ENCODE measurements at regions of chr12 and their contacts with region 1.

Region 1: GRCh38 chr12:55760663-55761062 is 17.7 kb downstream of the GDF11 start:
- DNase-seq: peak; percentile 82
- ATAC-seq: peak; percentile 97
- H3K4me3 Mint-ChIP-seq: no peak overlapping the region
- H3K27ac Mint-ChIP-seq: peak overlapping the region; percentile 93
- H3K4me1 Mint-ChIP-seq: peaks cover 20% of the 10 kb centered on the region
- H3K27me3 Mint-ChIP-seq: no peaks in the 10 kb centered on the region

Region 2: GRCh38 chr12:55745361-55746146 is 15.1 kb before region 1 on chr12:
- CTCF ChIA-PET with region 1: interaction called, 19 read pairs
- POLR2A ChIA-PET with region 1: no interaction called
- intact Hi-C with region 1: loop called in 1 of 2 experiments (anchors 2 kb)
- DNase-seq: no peak
- ATAC-seq: no peak
- H3K4me3 Mint-ChIP-seq: peak overlapping the region; percentile 82
- H3K27ac Mint-ChIP-seq: no peak overlapping the region
- H3K4me1 Mint-ChIP-seq: peaks cover 24% of the 10 kb centered on the region
- H3K27me3 Mint-ChIP-seq: no peaks in the 10 kb centered on the region

Region 3: DNA sequence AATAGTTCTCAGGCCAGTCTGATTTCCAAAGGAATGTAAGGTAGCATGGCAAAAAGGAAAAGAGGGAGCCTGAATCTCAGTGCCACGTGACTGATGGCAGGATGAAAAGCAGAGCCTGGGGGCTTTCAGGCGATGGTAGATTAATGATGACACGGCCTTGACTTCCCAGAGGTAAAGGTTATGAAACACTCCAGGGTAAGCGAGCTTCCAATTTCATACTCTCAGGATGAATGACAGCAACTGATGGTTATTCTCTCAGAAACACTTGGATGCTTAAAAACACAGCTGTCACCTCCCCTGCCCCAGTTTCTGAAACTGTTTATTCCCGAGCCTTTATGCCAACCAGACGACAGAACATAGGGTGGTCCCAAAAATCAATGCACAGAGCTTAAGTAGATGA is 11.1 kb after region 1 on chr12:
- CTCF ChIA-PET with region 1: interaction called, 15 read pairs
- POLR2A ChIA-PET with region 1: interaction called, 3 read pairs
- intact Hi-C with region 1: no loop called
- DNase-seq: no peak
- ATAC-seq: no peak
- H3K4me3 Mint-ChIP-seq: no peak overlapping the region
- H3K27ac Mint-ChIP-seq: peak overlapping the region; percentile 1
- H3K4me1 Mint-ChIP-seq: peaks cover 12% of the 10 kb centered on the region
- H3K27me3 Mint-ChIP-seq: no peaks in the 10 kb centered on the region

Region 4: DNA sequence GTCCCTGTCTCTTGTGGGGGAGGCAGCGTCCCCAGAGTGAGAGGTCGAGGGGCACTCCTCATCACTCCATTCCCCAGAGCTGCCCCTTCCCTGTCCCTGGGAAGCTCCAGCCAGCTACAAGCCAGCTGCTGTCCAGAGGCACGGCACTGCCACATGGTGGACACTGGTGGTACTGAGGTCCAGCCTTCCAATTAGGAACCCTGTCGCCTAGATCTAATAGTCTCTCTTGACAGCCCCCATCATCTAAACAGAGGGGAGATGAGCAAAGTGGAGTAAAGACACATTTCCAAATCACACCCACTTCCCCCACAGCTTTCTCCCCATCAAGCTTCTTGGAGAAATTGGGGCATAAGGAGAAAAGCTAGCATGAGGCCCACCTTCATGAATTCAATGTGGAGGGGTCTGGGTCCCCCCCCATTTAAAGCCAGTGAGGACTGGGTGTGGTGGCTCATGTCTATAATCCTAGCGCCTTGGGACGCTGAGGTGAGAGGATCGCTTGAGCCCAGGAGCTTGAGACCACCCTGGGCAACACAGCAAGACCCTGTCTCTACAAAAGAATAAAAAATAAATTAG is 1692.4 kb after region 1 on chr12:
- CTCF ChIA-PET with region 1: no interaction called
- POLR2A ChIA-PET with region 1: no interaction called
- intact Hi-C with region 1: no loop called
- DNase-seq: peak; percentile 81
- ATAC-seq: peak; percentile 45
- H3K4me3 Mint-ChIP-seq: peak overlapping the region; percentile 31
- H3K27ac Mint-ChIP-seq: peak overlapping the region; percentile 47
- H3K4me1 Mint-ChIP-seq: peaks cover 31% of the 10 kb centered on the region
- H3K27me3 Mint-ChIP-seq: no peaks in the 10 kb centered on the region